Right cardiac atrium (tissue), 5 donors: ENCODE measurements at regions of chr16 and their contacts with region 1.

Region 1: DNA sequence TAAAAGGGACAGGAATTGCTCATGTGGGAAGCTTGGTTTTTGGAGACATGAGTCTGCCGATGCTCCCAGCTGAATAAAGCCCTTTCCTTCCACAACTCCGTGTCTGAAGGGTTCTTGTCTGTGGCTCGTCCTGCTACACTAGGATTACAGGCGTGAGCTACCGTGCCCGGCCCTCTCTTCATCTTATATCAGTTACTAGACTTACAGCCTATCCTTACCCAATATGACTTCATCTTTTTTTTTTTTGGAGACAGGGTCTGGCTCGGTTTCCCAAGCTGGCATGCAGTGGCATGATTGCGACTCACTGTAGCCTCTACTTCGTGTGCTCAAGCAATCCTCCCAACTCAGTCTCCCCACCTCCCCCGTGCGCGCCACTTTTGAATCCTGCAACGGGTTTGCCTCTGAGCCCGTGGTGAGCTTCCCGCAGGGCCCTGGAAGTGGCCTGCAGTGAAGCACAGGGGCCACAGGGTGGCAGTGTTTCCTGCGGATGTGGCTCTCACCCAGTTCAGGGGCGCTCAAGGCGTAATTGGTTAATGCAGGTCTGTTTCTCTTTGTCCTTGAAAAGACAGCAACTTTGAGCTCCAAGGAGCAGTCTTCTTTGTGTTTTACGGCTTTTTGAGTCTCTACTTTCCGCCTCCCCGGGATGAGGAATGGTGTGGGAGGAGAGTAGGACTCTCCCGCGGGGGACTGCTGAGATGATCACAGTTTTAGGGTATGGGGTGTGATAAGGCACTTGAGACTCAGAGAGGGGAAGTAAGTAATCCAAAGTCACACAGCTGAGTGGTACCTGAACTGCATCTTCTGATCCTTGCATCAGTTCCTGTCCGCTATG is 22.7 kb upstream of the GPRC5B start:
- DNase-seq: peak; percentile 57 to 78 (median 78)
- ATAC-seq: peak; percentile 92
- H3K4me3 ChIP-seq: no peak overlapping the region
- H3K27ac ChIP-seq: no peak overlapping the region
- H3K4me1 ChIP-seq: no peaks in the 10 kb centered on the region
- H3K27me3 ChIP-seq: no peaks in the 10 kb centered on the region

Region 2: DNA sequence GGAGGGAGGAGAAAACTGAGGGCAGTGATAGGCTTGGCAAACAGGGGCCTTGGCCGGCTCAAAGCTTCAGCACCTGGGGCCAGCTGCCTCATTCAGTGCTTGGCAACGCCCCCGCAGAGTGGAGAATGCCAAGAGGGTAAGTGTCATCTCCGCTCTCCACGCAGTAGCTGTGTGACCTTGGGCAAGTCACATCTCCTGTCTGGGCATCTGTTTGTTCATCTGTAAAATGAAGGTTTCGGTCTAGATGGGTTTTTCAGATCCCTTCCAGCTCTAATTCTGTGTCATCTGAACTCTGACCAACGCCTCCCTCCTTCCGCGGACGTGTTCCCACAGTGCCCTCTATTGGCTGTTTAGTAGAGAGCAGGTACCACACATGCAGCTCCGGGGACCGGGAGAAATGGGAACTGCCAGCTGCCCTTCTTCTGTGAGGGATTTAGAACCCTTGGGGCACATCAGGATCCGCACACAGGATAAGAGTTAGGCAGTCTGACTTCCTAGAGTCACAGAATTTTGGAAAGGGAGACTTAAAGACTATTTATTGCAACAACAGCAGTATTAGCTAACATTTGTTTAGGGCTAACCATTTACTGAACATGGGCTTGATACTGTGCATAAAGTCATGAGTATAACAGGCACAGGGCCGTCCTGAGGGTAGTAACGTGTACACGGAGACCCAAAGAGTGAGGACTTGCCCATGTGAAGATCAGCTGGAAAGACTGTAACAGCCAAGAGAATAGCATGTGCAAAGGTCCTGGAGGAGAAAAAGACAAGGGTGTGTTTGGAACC is 393.1 kb after region 1 on chr16:
- intact Hi-C with region 1: loop called in 3 of 4 experiments (anchors 5 to 10 kb)
- DNase-seq: peak in 2 of 3 donors; percentile 21 to 53
- ATAC-seq: peak; percentile 64 to 66
- H3K4me3 ChIP-seq: no peak overlapping the region
- H3K27ac ChIP-seq: no peak overlapping the region
- H3K4me1 ChIP-seq: no peaks in the 10 kb centered on the region
- H3K27me3 ChIP-seq: no peaks in the 10 kb centered on the region

Region 3: GRCh38 chr16:20383106-20384029 is 476.0 kb after region 1 on chr16:
- intact Hi-C with region 1: loop called (anchors 5 to 10 kb)
- DNase-seq: peak in 1 of 3 donors; percentile 58
- ATAC-seq: peak; percentile 67 to 75
- H3K4me3 ChIP-seq: no peak overlapping the region
- H3K27ac ChIP-seq: no peak overlapping the region
- H3K4me1 ChIP-seq: no peaks in the 10 kb centered on the region
- H3K27me3 ChIP-seq: no peaks in the 10 kb centered on the region